ENCODE measurements at regions of chr2 and their contacts with region 1.

Region 1: GRCh38 chr2:54435325-54436226 is 20.6 kb upstream of the SPTBN1 start:
- DNase-seq: no peak
- H3K4me3 ChIP-seq: no peak overlapping the region
- H3K27ac ChIP-seq: no peak overlapping the region
- H3K4me1 ChIP-seq: peaks cover 8 to 36% (median 23%) of the 10 kb centered on the region in 4 experiments
- H3K27me3 ChIP-seq: no peaks in the 10 kb centered on the region

Region 2: DNA sequence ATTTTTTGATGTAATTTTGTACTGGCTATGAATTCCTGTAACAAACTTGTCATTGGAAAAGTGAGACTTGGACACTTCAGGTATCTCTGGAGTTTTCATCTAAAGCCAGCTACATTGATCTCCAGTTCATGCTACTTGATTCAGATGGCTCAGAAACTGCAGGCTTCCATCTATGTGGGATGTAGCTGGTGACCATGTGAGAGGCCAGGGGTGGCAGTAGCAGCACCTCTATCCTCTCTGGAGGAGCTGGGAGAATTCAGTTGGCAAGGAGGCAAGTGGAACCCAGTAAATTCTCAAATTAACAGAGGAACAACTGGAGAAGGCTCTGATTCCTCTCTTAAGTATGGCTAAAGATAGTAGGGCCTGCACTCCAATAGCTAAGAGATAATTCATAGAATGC is 10.5 kb after region 1 on chr2:
- CTCF ChIA-PET with region 1: interaction called, 12 read pairs
- POLR2A ChIA-PET with region 1: no interaction called
- DNase-seq: no peak
- H3K4me3 ChIP-seq: no peak overlapping the region
- H3K27ac ChIP-seq: no peak overlapping the region
- H3K4me1 ChIP-seq: peaks cover 0 to 4% (median under 1%) of the 10 kb centered on the region in 4 experiments
- H3K27me3 ChIP-seq: no peaks in the 10 kb centered on the region

Region 3: GRCh38 chr2:54457323-54458023 is 21.9 kb after region 1 on chr2:
- CTCF ChIA-PET with region 1: no interaction called
- POLR2A ChIA-PET with region 1: no interaction called
- DNase-seq: peak; percentile 42 to 78 (median 72)
- H3K4me3 ChIP-seq: peak overlapping the region; percentile 53 to 91 (median 75)
- H3K27ac ChIP-seq: no peak overlapping the region
- H3K4me1 ChIP-seq: peaks cover 4 to 45% (median 28%) of the 10 kb centered on the region in 4 experiments
- H3K27me3 ChIP-seq: peaks cover 0 to 10% (median 0%) of the 10 kb centered on the region in 5 experiments

Region 4: DNA sequence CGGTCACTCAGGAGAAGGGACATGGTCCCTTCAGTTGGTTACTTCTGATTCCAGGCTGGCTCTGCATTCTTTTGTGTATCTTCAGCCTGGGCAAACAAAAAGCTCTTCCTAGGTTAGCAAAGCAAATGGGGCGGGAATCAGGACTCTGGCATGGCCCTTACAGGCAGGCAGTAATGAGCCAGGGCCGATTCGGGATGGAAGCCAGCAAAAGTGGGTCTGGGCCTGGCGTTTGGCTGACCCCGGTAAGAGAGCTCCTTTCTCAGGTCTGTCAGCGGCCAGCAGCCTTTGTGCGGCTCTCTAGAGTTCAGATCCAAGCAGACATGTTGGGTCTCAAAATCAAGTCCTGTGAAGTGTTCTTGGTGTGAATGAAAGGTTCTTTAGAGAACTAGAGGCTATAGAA is 206.4 kb after region 1 on chr2:
- CTCF ChIA-PET with region 1: no interaction called
- POLR2A ChIA-PET with region 1: no interaction called
- DNase-seq: no peak
- H3K4me3 ChIP-seq: no peak overlapping the region
- H3K27ac ChIP-seq: no peak overlapping the region
- H3K4me1 ChIP-seq: no peaks in the 10 kb centered on the region
- H3K27me3 ChIP-seq: no peaks in the 10 kb centered on the region

Measured in common myeloid progenitor, CD34-positive (primary cell).